Activated CD8-positive, alpha-beta T cell treated with anti-CD3 and anti-CD28 coated beads for 36 hours (primary cell): ENCODE measurements at regions of chr4 and their contacts with region 1.

Region 1: DNA sequence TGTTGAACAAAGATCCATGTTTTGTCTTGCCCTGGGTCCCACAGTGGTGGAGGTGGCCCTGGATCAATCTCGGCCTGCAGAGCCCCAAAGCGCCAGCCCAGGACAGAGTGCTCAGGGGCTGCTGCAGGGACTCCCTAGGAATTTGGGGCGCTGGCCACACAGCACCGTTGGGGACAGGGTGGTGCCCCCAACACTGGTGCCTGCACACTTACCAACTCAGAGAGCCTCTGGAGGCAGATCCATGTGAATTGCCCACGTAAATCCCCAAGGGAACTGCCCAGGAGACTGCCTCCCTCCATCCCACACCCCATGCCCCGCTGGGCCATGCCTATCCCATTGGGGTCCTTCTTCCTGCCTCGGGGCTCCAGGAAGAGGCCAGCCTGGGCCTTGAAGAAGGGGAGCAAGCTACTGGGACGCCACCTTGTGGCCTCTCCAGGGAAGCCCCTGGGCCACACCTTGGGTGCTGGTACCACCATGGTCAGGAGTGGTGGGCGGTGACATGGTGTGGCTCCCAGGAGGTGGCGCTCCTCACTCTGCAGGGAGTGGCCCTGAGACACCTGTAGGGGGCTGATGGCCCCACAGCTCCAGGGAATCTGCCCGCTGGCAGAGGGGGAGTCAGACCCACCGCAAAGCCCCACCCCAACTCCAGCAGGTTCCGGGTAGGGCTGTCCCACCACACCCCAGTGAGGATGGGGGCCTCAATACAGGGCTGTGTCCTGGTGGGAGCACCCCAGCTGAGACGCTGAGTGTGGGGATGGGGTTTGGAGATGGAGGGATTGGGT is 22.8 kb downstream of the CFAP99 start:
- DNase-seq: peak; percentile 94
- ATAC-seq: peak; percentile 100
- H3K4me3 Mint-ChIP-seq: no peak overlapping the region
- H3K27ac Mint-ChIP-seq: peak overlapping the region; percentile 49
- H3K4me1 Mint-ChIP-seq: peaks cover 4% of the 10 kb centered on the region
- H3K27me3 Mint-ChIP-seq: no peaks in the 10 kb centered on the region
- CTCF ChIP-seq: peak; percentile 98

Region 2: GRCh38 chr4:2462218-2462991 is 20.8 kb after region 1 on chr4:
- CTCF ChIA-PET with region 1: interaction called, 15 read pairs
- POLR2A ChIA-PET with region 1: interaction called, 5 read pairs
- intact Hi-C with region 1: no loop called
- DNase-seq: peak; percentile 68
- ATAC-seq: peak; percentile 95
- H3K4me3 Mint-ChIP-seq: peak overlapping the region; percentile 65
- H3K27ac Mint-ChIP-seq: no peak overlapping the region
- H3K4me1 Mint-ChIP-seq: peaks cover 14% of the 10 kb centered on the region
- H3K27me3 Mint-ChIP-seq: peaks cover 2% of the 10 kb centered on the region
- CTCF ChIP-seq: peak; percentile 68

Region 3: GRCh38 chr4:2560167-2560566 is 118.6 kb after region 1 on chr4:
- CTCF ChIA-PET with region 1: no interaction called
- POLR2A ChIA-PET with region 1: no interaction called
- intact Hi-C with region 1: no loop called
- DNase-seq: no peak
- ATAC-seq: no peak
- H3K4me3 Mint-ChIP-seq: no peak overlapping the region
- H3K27ac Mint-ChIP-seq: no peak overlapping the region
- H3K4me1 Mint-ChIP-seq: peaks cover 23% of the 10 kb centered on the region
- H3K27me3 Mint-ChIP-seq: no peaks in the 10 kb centered on the region
- CTCF ChIP-seq: no peak